CD8-positive, alpha-beta memory T cell (primary cell): ENCODE measurements at regions of chr10 and their contacts with region 1.

Region 1: GRCh38 chr10:119644205-119644814 is 6.9 kb upstream of the BAG3 start:
- DNase-seq: no peak
- H3K4me3 ChIP-seq: no peak overlapping the region
- H3K4me3 Mint-ChIP-seq: no peak overlapping the region
- H3K27ac ChIP-seq: no peak overlapping the region
- H3K27ac Mint-ChIP-seq: no peak overlapping the region
- H3K4me1 ChIP-seq: peaks cover 22% of the 10 kb centered on the region
- H3K4me1 Mint-ChIP-seq: peaks cover 21 to 34% (median 32%) of the 10 kb centered on the region in 3 donors
- H3K27me3 ChIP-seq: no peaks in the 10 kb centered on the region
- H3K27me3 Mint-ChIP-seq: peaks cover 0 to 4% of the 10 kb centered on the region in 2 donors

Region 2: DNA sequence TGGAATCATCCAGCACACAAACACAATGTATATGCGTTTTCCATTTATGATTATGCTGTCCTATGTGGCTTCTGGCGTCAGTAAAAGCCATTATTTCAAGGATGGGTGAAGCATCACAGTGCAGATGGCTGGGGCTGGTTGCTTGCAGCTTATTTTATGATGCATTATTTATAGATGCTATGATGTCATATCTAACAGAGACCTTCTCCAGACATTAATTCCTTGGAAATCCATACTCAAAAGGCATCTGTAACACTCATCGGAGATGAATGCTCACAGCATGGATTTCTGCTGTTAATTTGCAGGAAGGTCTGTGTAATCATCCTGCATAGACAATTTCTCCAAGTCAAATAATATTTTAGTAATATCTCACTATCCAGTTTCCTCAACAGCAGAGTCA is 109.0 kb before region 1 on chr10:
- CTCF ChIA-PET with region 1: no interaction called
- POLR2A ChIA-PET with region 1: no interaction called
- DNase-seq: no peak
- H3K4me3 ChIP-seq: no peak overlapping the region
- H3K4me3 Mint-ChIP-seq: peak overlapping the region in 3 of 7 donors; percentile 27 to 36 (median 27)
- H3K27ac ChIP-seq: no peak overlapping the region
- H3K27ac Mint-ChIP-seq: peak overlapping the region in 6 of 8 donors; percentile 7 to 75 (median 34)
- H3K4me1 ChIP-seq: peaks cover 84% of the 10 kb centered on the region
- H3K4me1 Mint-ChIP-seq: peaks cover 67 to 82% (median 77%) of the 10 kb centered on the region in 3 donors
- H3K27me3 ChIP-seq: no peaks in the 10 kb centered on the region
- H3K27me3 Mint-ChIP-seq: no peaks in the 10 kb centered on the region

Region 3: GRCh38 chr10:119616882-119617570 is 27.3 kb before region 1 on chr10:
- CTCF ChIA-PET with region 1: no interaction called
- POLR2A ChIA-PET with region 1: no interaction called
- DNase-seq: no peak
- H3K4me3 ChIP-seq: no peak overlapping the region
- H3K4me3 Mint-ChIP-seq: no peak overlapping the region
- H3K27ac ChIP-seq: no peak overlapping the region
- H3K27ac Mint-ChIP-seq: no peak overlapping the region
- H3K4me1 ChIP-seq: no peaks in the 10 kb centered on the region
- H3K4me1 Mint-ChIP-seq: no peaks in the 10 kb centered on the region
- H3K27me3 ChIP-seq: no peaks in the 10 kb centered on the region
- H3K27me3 Mint-ChIP-seq: peaks cover 2 to 17% of the 10 kb centered on the region in 2 donors

Region 4: DNA sequence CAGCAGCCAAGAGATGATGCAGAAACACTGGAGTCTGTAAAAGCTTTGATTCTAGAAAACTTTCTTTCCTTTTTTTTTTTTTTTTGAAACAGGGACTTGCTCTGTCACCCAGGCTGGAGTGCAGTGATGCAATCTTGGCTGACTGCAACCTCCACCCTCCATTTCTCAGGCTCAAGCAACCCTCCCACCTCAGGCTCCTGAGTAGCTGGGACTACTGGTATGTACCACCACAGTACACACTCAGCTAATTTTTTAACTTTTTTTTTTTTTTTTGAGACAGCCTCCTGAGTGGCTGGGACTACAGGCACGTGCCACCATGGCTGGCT is 10.1 kb before region 1 on chr10:
- CTCF ChIA-PET with region 1: interaction called, 10 read pairs
- POLR2A ChIA-PET with region 1: no interaction called
- DNase-seq: no peak
- H3K4me3 ChIP-seq: no peak overlapping the region
- H3K4me3 Mint-ChIP-seq: no peak overlapping the region
- H3K27ac ChIP-seq: no peak overlapping the region
- H3K27ac Mint-ChIP-seq: no peak overlapping the region
- H3K4me1 ChIP-seq: no peaks in the 10 kb centered on the region
- H3K4me1 Mint-ChIP-seq: no peaks in the 10 kb centered on the region
- H3K27me3 ChIP-seq: no peaks in the 10 kb centered on the region
- H3K27me3 Mint-ChIP-seq: no peaks in the 10 kb centered on the region

Region 5: GRCh38 chr10:119700321-119700954 is 56.1 kb after region 1 on chr10:
- CTCF ChIA-PET with region 1: no interaction called
- POLR2A ChIA-PET with region 1: no interaction called
- DNase-seq: no peak
- H3K4me3 ChIP-seq: no peak overlapping the region
- H3K4me3 Mint-ChIP-seq: no peak overlapping the region
- H3K27ac ChIP-seq: no peak overlapping the region
- H3K27ac Mint-ChIP-seq: no peak overlapping the region
- H3K4me1 ChIP-seq: peaks cover 6% of the 10 kb centered on the region
- H3K4me1 Mint-ChIP-seq: peaks cover 9 to 15% (median 12%) of the 10 kb centered on the region in 3 donors
- H3K27me3 ChIP-seq: no peaks in the 10 kb centered on the region
- H3K27me3 Mint-ChIP-seq: peaks cover 4 to 18% of the 10 kb centered on the region in 2 donors